ENCODE measurements at regions of chr4 and their contacts with region 1.

Region 1: GRCh38 chr4:186587416-186588018 is 32.1 kb upstream of the MTNR1A start:
- DNase-seq: peak; percentile 83
- H3K4me3 ChIP-seq: no peak overlapping the region
- H3K27ac ChIP-seq: no peak overlapping the region
- H3K4me1 ChIP-seq: peaks cover 0 to 6% (median 0%) of the 10 kb centered on the region in 4 donors
- H3K27me3 ChIP-seq: no peaks in the 10 kb centered on the region
- CTCF ChIP-seq: peak; percentile 48 to 87 (median 76)
- EP300 ChIP-seq: no peak
- POLR2A ChIP-seq: no peak

Region 2: GRCh38 chr4:186297013-186297645 is 290.4 kb before region 1 on chr4:
- intact Hi-C with region 1: loop called (anchors 2 kb)
- DNase-seq: no peak
- H3K4me3 ChIP-seq: no peak overlapping the region
- H3K27ac ChIP-seq: no peak overlapping the region
- H3K4me1 ChIP-seq: peaks cover 0 to 4% (median 0%) of the 10 kb centered on the region in 4 donors
- H3K27me3 ChIP-seq: peaks cover 0 to 10% (median 8%) of the 10 kb centered on the region in 3 donors
- CTCF ChIP-seq: peak; percentile 25 to 62 (median 40)
- EP300 ChIP-seq: no peak
- POLR2A ChIP-seq: no peak

Region 3: GRCh38 chr4:186441502-186441901 is 146.0 kb before region 1 on chr4:
- intact Hi-C with region 1: no loop called
- DNase-seq: no peak
- H3K4me3 ChIP-seq: no peak overlapping the region
- H3K27ac ChIP-seq: no peak overlapping the region
- H3K4me1 ChIP-seq: no peaks in the 10 kb centered on the region
- H3K27me3 ChIP-seq: no peaks in the 10 kb centered on the region
- CTCF ChIP-seq: no peak
- EP300 ChIP-seq: no peak
- POLR2A ChIP-seq: no peak

Region 4: GRCh38 chr4:186472948-186473347 is 114.6 kb before region 1 on chr4:
- intact Hi-C with region 1: loop called (anchors 2 kb)
- DNase-seq: no peak
- H3K4me3 ChIP-seq: no peak overlapping the region
- H3K27ac ChIP-seq: no peak overlapping the region
- H3K4me1 ChIP-seq: no peaks in the 10 kb centered on the region
- H3K27me3 ChIP-seq: no peaks in the 10 kb centered on the region
- CTCF ChIP-seq: peak in 3 of 4 experiments; percentile 47 to 53 (median 47)
- EP300 ChIP-seq: no peak
- POLR2A ChIP-seq: no peak

Region 5: DNA sequence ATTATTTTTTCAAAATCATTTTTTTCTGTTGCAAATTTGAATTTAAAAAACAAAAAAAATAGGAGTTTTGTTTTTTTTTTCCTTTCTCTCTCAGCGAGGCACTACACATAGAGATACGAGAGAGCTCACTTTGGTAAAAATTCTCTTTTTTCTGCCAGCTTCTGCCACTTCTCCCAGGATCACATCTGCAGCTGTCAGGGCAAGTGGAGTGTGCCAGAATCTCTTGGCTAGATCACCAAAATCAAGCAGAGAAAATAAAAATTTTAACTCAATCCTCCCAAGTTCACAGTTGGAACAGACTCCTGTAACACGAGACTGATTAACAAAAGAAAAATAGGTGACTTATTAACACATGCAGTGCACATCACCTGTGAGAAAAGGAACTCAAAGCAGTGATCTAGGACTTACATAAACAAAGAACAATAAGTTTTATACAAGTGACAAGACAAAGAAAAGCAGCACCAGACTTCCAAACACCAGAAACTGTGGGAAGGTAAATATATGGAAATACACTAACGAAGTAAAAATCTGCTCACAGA is 1194.8 kb after region 1 on chr4:
- intact Hi-C with region 1: no loop called
- DNase-seq: no peak
- H3K4me3 ChIP-seq: no peak overlapping the region
- H3K27ac ChIP-seq: no peak overlapping the region
- H3K4me1 ChIP-seq: no peaks in the 10 kb centered on the region
- H3K27me3 ChIP-seq: no peaks in the 10 kb centered on the region
- CTCF ChIP-seq: no peak
- EP300 ChIP-seq: no peak
- POLR2A ChIP-seq: no peak